Mammary epithelial cell (primary cell): ENCODE measurements at regions of chr12 and their contacts with region 1.

Region 1: GRCh38 chr12:3453990-3454675 is 36.9 kb upstream of the PRMT8 start:
- DNase-seq: peak; percentile 99
- H3K4me3 ChIP-seq: no peak overlapping the region
- H3K27ac ChIP-seq: peak overlapping the region; percentile 94
- H3K4me1 ChIP-seq: peaks cover 51% of the 10 kb centered on the region
- H3K27me3 ChIP-seq: no peaks in the 10 kb centered on the region
- CTCF ChIP-seq: no peak

Region 2: DNA sequence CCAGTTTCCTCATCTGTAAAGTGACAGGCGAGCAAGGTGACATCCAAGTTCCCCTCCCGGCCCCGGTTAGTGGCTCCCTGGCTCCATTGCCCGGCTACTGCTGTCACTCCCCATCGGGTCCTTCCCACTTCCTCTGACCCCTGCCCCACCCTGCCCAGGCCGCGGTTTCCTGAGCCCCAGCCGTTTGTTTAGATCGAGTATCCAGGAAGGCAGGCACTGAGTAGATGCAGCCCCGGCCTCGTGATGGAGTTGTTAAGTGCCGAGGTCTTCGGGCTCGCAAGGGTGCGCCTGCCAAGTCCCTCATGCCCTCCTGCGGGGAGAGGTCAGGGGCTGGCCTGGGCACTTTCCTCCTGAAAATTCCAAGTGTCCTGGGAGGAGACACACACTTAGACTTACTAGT is 439.5 kb before region 1 on chr12:
- CTCF ChIA-PET with region 1: no interaction called
- dilution Hi-C with region 1: no loop called
- in situ Hi-C with region 1: no loop called
- intact Hi-C with region 1: no loop called
- DNase-seq: no peak
- H3K4me3 ChIP-seq: no peak overlapping the region
- H3K27ac ChIP-seq: no peak overlapping the region
- H3K4me1 ChIP-seq: no peaks in the 10 kb centered on the region
- H3K27me3 ChIP-seq: no peaks in the 10 kb centered on the region
- CTCF ChIP-seq: no peak

Region 3: DNA sequence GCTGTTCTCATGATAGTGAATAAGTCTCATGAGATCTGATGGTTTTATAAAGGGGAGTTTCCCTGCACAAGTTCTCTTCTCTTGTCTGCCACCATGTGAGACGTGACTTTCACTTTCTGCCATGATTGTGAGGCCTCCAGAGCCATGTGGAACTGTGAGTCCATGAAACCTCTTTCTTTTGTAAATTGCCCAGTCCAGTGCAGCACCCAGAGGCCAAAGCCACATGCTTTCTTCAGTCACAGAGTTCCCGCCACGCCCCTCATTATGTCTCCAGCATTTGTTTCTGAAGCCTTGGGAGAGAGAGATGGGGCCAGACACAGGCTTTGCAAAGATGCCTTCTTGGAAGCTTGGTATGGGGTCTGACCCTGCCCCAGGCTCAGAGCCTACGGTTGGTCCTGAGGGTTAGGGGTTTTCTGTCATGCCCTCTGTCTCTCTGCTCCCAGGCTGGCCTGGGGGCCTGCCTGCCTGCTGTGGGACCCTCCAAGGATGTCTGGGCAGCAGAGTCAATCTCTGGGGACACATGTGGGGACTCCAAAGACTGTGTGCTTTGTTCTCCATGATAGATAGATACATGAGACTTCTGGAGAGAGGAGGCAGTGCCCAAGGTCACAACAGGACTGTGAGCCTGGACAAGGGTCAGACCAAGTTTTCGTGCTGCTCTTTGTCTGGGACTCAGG is 77.2 kb before region 1 on chr12:
- CTCF ChIA-PET with region 1: no interaction called
- dilution Hi-C with region 1: no loop called
- in situ Hi-C with region 1: no loop called
- intact Hi-C with region 1: loop called (anchors 5 kb)
- DNase-seq: no peak
- H3K4me3 ChIP-seq: no peak overlapping the region
- H3K27ac ChIP-seq: no peak overlapping the region
- H3K4me1 ChIP-seq: peaks cover 20% of the 10 kb centered on the region
- H3K27me3 ChIP-seq: no peaks in the 10 kb centered on the region
- CTCF ChIP-seq: no peak

Region 4: DNA sequence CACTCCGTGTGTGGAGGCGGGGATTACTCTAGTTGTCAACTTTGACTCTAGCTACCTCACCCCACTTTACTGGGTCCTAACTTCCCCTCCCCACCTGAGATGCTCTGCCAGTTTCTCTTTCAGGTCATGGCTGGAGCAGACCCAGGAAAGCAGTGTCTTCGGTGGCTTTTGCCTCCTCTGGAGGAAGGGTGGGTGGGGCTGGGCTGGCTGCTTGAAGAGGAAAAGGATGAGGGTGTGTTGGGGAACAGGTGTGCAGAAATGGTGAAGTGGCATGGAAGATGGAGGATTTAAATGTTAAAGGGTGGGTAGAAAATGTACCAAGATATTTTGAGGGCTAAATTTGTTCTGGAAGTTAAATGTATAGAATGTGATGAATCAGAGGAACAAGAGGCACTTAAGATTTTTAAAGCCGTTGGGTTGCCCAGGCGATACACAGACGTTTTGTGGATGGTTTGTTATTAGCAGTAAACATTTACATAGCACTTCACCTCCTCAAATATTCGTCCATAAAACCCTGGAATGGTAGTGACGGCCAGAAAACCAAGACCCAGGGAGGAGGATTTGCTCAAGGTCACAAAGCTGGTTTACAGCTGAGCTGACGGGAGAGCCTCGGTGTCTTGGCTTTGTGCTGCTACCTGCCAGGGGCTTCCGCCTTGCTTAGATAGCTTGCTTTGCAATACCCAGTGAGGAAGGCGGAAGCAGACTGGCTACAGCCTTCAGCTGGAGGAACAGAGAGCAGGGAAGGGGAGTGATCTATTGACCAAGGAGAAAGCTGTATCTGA is 35.3 kb before region 1 on chr12:
- CTCF ChIA-PET with region 1: no interaction called
- dilution Hi-C with region 1: no loop called
- in situ Hi-C with region 1: no loop called
- intact Hi-C with region 1: loop called (anchors 2 kb)
- DNase-seq: no peak
- H3K4me3 ChIP-seq: no peak overlapping the region
- H3K27ac ChIP-seq: no peak overlapping the region
- H3K4me1 ChIP-seq: no peaks in the 10 kb centered on the region
- H3K27me3 ChIP-seq: no peaks in the 10 kb centered on the region
- CTCF ChIP-seq: no peak

Region 5: DNA sequence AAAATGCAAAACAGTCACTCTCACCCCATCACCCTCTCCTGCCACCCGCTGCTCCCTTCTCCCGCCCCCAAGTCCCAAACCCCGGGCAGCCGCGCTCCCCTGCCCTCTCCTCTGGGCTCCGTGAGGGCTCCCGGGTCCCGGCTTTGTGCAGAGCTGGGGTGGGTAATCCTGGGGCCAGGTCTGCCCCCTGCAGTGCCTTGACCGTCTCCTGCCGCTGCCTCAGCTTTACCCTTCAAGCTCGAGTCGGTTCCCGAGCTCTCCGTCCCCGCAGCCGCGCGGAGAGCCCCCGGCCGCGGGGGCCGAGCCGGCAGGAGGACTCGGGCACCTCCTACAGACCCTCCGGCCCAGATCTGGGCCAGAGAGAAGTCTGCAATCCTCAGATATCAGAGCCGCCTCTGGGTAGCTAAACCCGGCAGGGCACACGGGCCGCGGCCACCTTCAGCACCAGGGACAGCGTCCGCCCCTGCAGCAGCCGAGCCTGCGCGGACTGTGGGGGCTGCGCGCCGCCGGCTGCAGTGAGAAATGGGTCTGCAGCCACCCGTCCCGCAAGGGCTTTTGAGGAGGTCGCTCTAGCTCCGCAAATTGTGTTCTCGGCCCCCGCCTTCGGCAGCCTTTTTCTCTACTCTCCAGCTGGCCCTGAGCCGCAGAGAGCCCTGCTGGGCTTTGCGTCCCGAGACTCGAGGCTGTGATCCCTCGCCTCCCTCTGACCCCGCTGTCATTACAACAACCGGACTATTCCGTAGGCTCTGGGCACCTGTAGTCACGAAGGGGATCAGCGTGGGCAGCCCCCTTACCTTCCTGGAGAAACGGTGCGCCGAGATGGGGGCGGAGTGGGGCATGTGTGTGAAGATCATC is 38.0 kb after region 1 on chr12:
- CTCF ChIA-PET with region 1: interaction called, 14 read pairs
- dilution Hi-C with region 1: no loop called
- in situ Hi-C with region 1: no loop called
- intact Hi-C with region 1: loop called (anchors 1 kb)
- DNase-seq: peak; percentile 66
- H3K4me3 ChIP-seq: peak overlapping the region; percentile 64 to 85 (median 77)
- H3K27ac ChIP-seq: peak overlapping the region; percentile 95
- H3K4me1 ChIP-seq: peaks cover 40% of the 10 kb centered on the region
- H3K27me3 ChIP-seq: no peaks in the 10 kb centered on the region
- CTCF ChIP-seq: peak in 1 of 2 donors; percentile 32

Region 6: DNA sequence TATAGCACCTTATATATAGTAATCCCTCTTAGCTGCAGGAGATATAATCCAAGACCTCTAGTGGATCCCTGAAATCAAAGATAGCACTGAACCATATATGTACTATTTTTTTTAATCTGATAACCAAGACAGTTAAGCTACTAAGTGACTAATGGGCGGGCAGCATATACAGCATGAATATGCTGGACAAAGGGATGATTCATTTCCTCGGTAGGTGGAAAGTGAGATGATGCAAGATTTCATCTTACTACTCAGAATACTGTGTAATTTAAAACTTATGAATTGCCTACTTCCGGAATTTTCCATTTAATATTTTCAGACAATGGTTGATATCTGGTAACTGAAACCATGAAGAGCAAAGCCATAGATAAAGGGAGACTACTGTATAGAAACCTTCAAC is 73.0 kb after region 1 on chr12:
- CTCF ChIA-PET with region 1: no interaction called
- dilution Hi-C with region 1: no loop called
- in situ Hi-C with region 1: no loop called
- intact Hi-C with region 1: loop called (anchors 1 kb)
- DNase-seq: peak; percentile 90
- H3K4me3 ChIP-seq: no peak overlapping the region
- H3K27ac ChIP-seq: peak overlapping the region; percentile 92
- H3K4me1 ChIP-seq: peaks cover 24% of the 10 kb centered on the region
- H3K27me3 ChIP-seq: no peaks in the 10 kb centered on the region
- CTCF ChIP-seq: no peak